ENCODE measurements at regions of chr4 and their contacts with region 1.

Region 1: DNA sequence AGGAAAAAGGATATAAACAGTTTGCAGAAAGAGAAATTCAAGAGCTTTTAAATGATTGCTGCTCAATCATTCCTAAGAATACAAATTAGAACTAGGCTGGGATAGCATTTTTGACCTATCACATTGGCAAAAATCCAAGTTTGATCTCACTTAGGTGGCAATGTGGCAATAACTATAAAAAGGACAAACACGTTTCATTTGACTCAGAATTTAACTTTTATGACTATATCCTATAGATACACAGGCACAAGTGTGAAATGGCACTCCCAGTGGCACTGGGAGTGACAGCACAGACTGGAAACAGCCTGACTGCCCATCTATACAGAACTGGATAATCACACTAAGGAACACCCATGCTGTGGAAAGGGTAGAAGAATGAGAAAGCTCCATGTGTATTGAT is 11.1 kb downstream of the CENPU start:
- DNase-seq: peak; percentile 15
- ATAC-seq: no peak
- H3K4me3 ChIP-seq: no peak overlapping the region
- H3K27ac ChIP-seq: no peak overlapping the region
- H3K4me1 ChIP-seq: no peaks in the 10 kb centered on the region
- H3K27me3 ChIP-seq: no peaks in the 10 kb centered on the region
- CTCF ChIP-seq: peak; percentile 29; the same call in 1 of the 2 replicates

Region 2: GRCh38 chr4:184712322-184712721 is 10.5 kb before region 1 on chr4:
- CTCF ChIA-PET with region 1: interaction called, 11 read pairs
- POLR2A ChIA-PET with region 1: no interaction called
- intact Hi-C with region 1: no loop called
- DNase-seq: no peak
- ATAC-seq: no peak
- H3K4me3 ChIP-seq: no peak overlapping the region
- H3K27ac ChIP-seq: no peak overlapping the region
- H3K4me1 ChIP-seq: no peaks in the 10 kb centered on the region
- H3K27me3 ChIP-seq: no peaks in the 10 kb centered on the region
- CTCF ChIP-seq: no peak

Region 3: DNA sequence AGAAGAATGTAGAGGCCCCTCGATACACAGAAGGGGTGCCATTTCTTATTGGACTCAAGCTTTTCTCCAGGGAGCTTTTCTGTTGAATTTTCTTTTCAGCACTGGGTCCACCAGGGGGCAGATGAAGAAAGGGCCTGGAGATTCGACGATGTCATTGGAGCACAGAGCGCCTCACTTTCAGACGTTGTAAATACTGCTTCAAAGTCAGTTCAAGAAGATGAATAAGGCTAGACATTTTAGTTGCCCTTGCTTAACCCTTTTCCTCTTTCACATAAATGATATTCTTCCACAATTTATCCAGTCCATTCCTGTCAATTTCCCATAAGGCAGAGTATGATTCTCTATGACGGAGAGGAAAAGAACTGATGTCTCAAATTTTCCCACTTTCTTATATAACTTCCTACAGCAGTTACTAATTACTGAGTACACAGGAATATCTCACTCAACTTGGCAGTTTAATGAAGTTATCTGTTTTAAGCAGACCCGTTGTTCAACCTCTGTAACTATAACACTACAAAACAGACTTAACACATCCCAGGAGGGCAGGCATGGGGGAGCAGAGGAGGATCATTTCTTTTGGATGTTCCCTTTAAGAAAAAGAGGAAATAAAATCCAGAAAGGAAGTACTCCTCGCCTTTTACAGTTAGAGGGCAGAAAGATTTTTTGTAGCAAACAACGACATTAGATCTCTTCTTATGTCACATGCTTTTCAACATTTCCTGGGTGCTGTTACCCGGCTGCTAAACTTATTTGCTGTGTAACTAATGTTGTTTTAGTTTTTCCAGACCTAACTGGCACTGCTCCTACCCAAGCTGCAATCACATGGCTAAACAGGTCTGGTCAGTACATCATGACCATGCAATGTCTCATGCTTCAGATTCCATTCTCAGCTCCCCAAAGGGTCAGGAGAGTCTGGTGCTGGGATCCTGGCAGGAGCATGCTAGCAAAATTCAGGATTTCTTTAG is 23.3 kb after region 1 on chr4:
- CTCF ChIA-PET with region 1: no interaction called
- POLR2A ChIA-PET with region 1: no interaction called
- intact Hi-C with region 1: no loop called
- DNase-seq: peak; percentile 82
- ATAC-seq: peak; percentile 82
- H3K4me3 ChIP-seq: peak overlapping the region; percentile 37
- H3K27ac ChIP-seq: peak overlapping the region; percentile 66
- H3K4me1 ChIP-seq: peaks cover 20% of the 10 kb centered on the region
- H3K27me3 ChIP-seq: no peaks in the 10 kb centered on the region
- CTCF ChIP-seq: peak; percentile 79